Activated CD8-positive, alpha-beta T cell treated with anti-CD3 and anti-CD28 coated beads, Interleukin-2, amount 10 ng/mL, durations not matched to agents 7 days and 5 days (primary cell): ENCODE measurements at regions of chr11 and their contacts with region 1.

Region 1: GRCh38 chr11:67401495-67402191 is at the start of gene PPP1CA:
- DNase-seq: peak; percentile 92
- ATAC-seq: peak; percentile 74
- H3K4me3 Mint-ChIP-seq: peak within 1 kb of the TSS; percentile 90
- H3K27ac Mint-ChIP-seq: peak within 1 kb of the TSS; percentile 93
- H3K4me1 Mint-ChIP-seq: peaks cover 65% of the 10 kb centered on the region
- H3K27me3 Mint-ChIP-seq: no peaks in the 10 kb centered on the region
- total RNA-seq, gene PPP1CA: 429 to 434 TPM

Region 2: DNA sequence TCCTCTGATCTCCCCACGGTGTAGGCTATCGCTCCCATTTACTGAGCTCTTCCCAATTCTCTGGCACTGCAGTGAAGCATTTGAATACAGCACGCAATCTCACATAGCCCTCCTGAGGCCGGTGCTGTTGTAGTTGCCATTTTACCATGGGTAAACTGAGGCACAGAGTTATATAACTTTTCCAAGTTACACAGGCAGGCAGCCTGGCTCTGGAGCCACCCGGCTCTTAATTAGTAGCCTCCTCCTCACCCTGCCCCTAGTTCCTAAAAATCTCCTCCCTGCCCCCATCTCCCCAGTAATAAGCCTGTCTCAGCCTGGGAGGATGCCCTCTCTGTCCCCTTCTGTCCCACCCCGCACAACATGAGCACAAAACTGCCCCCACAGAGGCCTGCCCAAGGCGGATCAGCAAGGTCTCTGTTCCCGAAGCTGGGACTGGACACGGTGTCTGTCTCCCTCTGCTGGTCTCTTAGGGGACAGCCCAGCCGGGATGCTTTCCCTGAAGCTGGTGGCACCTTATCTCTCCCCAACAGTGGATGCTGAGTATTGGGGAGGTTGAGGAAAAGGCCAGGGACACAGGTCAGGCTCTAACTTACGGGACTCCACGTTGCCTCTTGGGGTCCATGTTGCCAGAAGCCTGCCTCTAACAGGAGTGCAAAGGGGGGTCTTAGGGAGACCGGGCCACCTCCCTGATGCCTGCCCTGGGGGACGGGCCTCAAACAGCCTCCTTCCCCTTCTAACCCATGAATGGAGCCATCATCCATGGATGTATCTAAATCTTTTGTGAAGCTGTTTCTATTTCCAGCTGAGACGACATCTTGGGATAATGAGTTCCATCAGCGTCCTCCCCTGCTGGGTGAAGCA is 19.1 kb before region 1 on chr11:
- CTCF ChIA-PET with region 1: interaction called, 12 read pairs
- POLR2A ChIA-PET with region 1: no interaction called
- DNase-seq: peak; percentile 90
- ATAC-seq: peak; percentile 97
- H3K4me3 Mint-ChIP-seq: no peak overlapping the region
- H3K27ac Mint-ChIP-seq: no peak overlapping the region
- H3K4me1 Mint-ChIP-seq: peaks cover 7% of the 10 kb centered on the region
- H3K27me3 Mint-ChIP-seq: peaks cover 19% of the 10 kb centered on the region

Region 3: DNA sequence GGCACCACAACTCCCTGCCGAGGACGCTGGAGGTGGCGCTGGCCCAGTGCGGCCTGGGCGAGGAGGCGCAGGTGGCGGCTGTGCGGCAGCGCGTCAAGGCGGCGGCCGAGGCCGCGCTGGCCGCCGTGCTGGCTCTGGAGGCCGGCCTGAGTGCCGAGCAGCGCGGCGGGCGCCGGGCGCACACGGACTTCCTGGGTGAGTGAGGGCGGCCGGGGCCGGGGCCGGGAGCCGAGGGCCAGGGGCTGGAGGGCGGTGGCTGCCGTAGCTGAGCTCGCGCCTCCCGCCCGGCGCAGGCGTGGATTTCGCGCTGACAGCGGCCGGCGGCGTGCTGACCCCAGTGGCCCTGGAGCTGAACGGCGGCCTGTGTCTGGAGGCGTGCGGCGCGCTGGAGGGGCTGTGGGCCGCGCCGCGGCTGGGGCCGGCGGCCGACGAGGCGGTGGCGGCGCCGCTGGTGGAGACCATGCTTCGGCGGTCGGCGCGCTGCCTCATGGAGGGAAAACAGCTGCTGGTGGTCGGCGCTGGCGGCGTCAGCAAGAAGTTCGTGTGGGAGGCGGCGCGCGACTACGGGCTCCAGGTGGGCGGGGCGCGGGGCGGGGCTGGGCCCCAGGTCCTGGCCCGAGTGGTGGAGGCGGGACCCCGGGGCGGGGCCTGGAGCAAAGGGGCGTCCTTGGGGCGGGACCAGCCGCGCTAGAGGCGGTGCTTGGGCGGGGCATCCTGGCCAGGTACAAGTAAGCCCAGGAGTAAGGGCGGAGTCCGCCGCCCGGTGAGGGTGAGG is 19.2 kb after region 1 on chr11:
- CTCF ChIA-PET with region 1: interaction called, 73 read pairs
- POLR2A ChIA-PET with region 1: interaction called, 95 read pairs
- DNase-seq: peak; percentile 99
- ATAC-seq: peak; percentile 86
- H3K4me3 Mint-ChIP-seq: peak overlapping the region; percentile 79
- H3K27ac Mint-ChIP-seq: peak overlapping the region; percentile 86
- H3K4me1 Mint-ChIP-seq: peaks cover 70% of the 10 kb centered on the region
- H3K27me3 Mint-ChIP-seq: no peaks in the 10 kb centered on the region

Region 4: DNA sequence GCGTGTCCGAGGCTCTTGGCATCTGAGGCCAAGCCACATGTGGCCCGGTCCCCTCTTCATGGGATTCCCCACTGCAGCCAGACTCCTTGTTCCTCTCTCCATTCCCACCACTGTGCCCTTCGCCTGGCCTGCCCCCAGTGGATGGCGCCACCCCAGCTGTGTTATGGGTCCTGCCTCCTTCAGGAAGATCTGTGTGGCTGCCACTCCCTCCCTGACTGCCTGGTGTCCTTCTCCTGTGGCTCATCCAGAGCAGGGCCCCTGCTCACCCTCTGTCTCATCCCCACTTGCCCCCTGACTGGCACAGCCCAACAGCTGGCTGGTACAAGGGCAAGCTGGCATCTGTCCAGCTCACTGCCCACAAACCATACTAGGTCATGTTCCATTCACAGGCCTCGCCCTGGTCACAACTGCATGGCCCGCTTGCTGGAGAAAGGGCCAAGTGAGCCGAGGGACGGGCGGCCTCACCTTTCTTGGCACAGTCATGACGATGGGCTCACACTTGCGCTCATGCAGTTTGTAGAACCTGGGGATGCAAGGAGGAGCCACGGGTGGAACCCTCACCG is 37.8 kb after region 1 on chr11:
- CTCF ChIA-PET with region 1: interaction called, 20 read pairs
- POLR2A ChIA-PET with region 1: interaction called, 109 read pairs
- DNase-seq: peak; percentile 61
- ATAC-seq: no peak
- H3K4me3 Mint-ChIP-seq: peak overlapping the region; percentile 84
- H3K27ac Mint-ChIP-seq: peak overlapping the region; percentile 96
- H3K4me1 Mint-ChIP-seq: peaks cover 56% of the 10 kb centered on the region
- H3K27me3 Mint-ChIP-seq: no peaks in the 10 kb centered on the region

Region 5: GRCh38 chr11:67482825-67483798 is 81.5 kb after region 1 on chr11 and contains the start of gene AIP:
- CTCF ChIA-PET with region 1: interaction called, 5 read pairs
- POLR2A ChIA-PET with region 1: interaction called, 28 read pairs
- DNase-seq: peak; percentile 99
- ATAC-seq: peak; percentile 87
- H3K4me3 Mint-ChIP-seq: peak within 1 kb of the TSS; percentile 93
- H3K27ac Mint-ChIP-seq: peak within 1 kb of the TSS; percentile 99
- H3K4me1 Mint-ChIP-seq: peaks cover 53% of the 10 kb centered on the region
- H3K27me3 Mint-ChIP-seq: peaks cover 5% of the 10 kb centered on the region
- total RNA-seq, gene AIP: 156 to 163 TPM